Activated B cell treated with CpG ODN at 0.5 μM for 24 hours (primary cell): ENCODE measurements at regions of chr9 and their contacts with region 1.

Region 1: GRCh38 chr9:91422758-91423711 is 597 bp downstream of the NFIL3 start:
- DNase-seq: peak; percentile 62
- ATAC-seq: peak; percentile 49
- H3K4me3 Mint-ChIP-seq: peak overlapping the region; percentile 93
- H3K27ac Mint-ChIP-seq: peak overlapping the region; percentile 80
- H3K4me1 Mint-ChIP-seq: peaks cover 38% of the 10 kb centered on the region
- H3K27me3 Mint-ChIP-seq: peaks cover 32% of the 10 kb centered on the region
- CTCF ChIP-seq: no peak

Region 2: GRCh38 chr9:90914868-90915483 is 508.1 kb before region 1 on chr9:
- CTCF ChIA-PET with region 1: interaction called, 154 read pairs
- POLR2A ChIA-PET with region 1: interaction called, 9 read pairs
- intact Hi-C with region 1: loop called (anchors 1 kb)
- DNase-seq: peak; percentile 60
- ATAC-seq: peak; percentile 98
- H3K4me3 Mint-ChIP-seq: no peak overlapping the region
- H3K27ac Mint-ChIP-seq: no peak overlapping the region
- H3K4me1 Mint-ChIP-seq: peaks cover 21% of the 10 kb centered on the region
- H3K27me3 Mint-ChIP-seq: no peaks in the 10 kb centered on the region
- CTCF ChIP-seq: no peak

Region 3: DNA sequence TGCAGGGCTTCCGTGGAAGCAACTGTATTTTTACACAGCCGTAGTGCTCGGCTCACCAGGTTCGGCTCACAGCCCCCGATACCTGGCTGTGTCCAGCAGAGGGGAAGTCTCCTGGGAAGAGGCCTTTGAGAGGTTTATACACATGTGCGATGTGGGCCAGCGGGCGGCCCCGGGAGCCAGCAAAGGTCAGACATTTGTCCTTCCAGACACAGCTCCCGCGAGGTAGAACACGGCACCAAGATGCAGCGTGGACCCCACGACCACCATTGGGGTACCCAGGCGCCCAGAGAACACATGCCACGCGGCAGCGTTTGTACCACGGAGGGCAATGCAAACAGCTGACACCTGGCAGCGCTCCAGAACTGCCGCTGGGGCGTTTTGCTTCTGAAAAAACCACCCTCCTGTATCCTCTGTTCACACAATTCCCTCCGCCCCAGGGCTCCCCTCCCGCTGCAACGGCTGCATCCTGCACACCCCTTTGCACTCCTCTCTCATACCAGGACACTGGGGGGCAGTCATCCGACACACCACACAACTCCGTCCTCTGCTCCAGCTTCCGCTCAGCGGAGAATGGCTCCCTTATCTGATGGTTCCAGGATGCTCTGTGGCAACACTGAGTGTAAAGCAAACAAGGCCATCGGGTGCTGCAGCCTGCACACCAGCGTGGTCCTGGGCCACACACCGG is 386.1 kb before region 1 on chr9:
- CTCF ChIA-PET with region 1: interaction called, 25 read pairs
- POLR2A ChIA-PET with region 1: no interaction called
- intact Hi-C with region 1: loop called (anchors 1 kb)
- DNase-seq: no peak
- ATAC-seq: peak; percentile 34
- H3K4me3 Mint-ChIP-seq: peak overlapping the region; percentile 55
- H3K27ac Mint-ChIP-seq: no peak overlapping the region
- H3K4me1 Mint-ChIP-seq: peaks cover 31% of the 10 kb centered on the region
- H3K27me3 Mint-ChIP-seq: peaks cover 12% of the 10 kb centered on the region
- CTCF ChIP-seq: no peak

Region 4: DNA sequence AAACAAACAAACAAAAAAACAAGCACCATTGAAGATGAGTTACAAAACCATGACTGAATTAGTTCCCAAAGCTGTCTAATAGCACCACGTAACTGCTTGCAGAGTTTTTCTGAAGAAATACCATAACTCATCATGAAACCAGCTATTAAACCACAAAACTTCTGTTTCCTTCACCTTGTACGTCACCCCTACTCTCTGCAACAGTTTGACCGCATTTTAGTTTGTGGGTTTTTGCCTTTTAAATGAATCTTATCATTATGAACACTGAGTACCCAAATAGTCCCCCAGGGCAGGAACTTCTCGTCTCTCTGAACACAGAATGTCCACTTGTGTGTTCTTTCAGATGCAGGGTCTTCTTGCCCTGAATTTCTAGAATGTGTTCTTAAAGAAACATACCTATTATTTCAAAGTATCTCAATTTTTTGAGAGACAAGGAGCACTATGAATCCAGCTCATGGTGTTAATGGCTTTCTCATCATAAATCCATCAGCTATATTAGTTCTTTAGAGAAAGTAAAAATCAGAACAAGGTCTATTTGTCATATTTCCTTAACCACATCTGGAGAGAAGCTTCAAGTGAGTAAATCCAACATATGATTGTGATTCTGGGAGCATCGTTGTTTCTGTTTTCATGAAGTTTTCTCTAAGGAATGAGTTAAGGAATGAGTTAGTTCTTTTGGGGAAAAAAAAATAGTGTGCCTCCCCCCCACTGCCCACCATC is 271.9 kb before region 1 on chr9:
- CTCF ChIA-PET with region 1: no interaction called
- POLR2A ChIA-PET with region 1: interaction called, 3 read pairs
- intact Hi-C with region 1: loop called (anchors 5 kb)
- DNase-seq: no peak
- ATAC-seq: peak; percentile 77
- H3K4me3 Mint-ChIP-seq: peak overlapping the region; percentile 30
- H3K27ac Mint-ChIP-seq: peak overlapping the region; percentile 62
- H3K4me1 Mint-ChIP-seq: peaks cover 50% of the 10 kb centered on the region
- H3K27me3 Mint-ChIP-seq: no peaks in the 10 kb centered on the region
- CTCF ChIP-seq: no peak

Region 5: DNA sequence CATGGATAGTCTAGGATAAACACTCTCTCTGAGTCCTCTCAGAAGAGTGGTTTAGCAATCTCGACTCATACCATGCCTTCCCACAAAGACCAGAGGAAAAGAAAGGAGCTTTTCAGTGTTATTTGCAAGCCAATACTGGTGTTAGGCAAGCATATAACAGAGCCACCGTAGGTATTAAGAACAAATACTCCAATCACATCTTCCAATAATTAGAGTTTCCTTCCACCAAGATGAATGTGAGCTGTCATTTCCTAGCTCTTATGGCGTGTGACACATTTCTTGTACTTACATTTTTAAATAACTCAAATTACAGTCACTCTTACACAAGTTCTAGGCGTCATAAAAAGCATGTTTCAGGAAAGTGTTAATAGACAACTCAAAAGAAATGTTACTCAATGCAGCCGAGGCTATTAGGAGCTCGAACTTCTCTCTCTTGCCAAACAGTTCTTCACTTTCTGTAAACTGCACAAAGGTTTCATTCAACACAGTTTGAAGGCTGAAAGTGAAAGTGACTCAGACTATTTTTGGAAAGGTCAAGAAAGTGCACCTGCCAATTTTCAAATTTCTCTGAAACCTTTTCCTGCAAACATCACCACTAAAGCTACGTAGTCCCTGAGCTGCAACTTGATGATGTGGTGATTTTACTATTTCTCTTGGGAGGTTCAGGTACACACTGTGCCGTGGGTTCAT is 215.2 kb before region 1 on chr9:
- CTCF ChIA-PET with region 1: no interaction called
- POLR2A ChIA-PET with region 1: no interaction called
- intact Hi-C with region 1: loop called (anchors 1 kb)
- DNase-seq: no peak
- ATAC-seq: peak; percentile 89
- H3K4me3 Mint-ChIP-seq: peak overlapping the region; percentile 47
- H3K27ac Mint-ChIP-seq: peak overlapping the region; percentile 83
- H3K4me1 Mint-ChIP-seq: peaks cover 36% of the 10 kb centered on the region
- H3K27me3 Mint-ChIP-seq: no peaks in the 10 kb centered on the region
- CTCF ChIP-seq: no peak

Region 6: DNA sequence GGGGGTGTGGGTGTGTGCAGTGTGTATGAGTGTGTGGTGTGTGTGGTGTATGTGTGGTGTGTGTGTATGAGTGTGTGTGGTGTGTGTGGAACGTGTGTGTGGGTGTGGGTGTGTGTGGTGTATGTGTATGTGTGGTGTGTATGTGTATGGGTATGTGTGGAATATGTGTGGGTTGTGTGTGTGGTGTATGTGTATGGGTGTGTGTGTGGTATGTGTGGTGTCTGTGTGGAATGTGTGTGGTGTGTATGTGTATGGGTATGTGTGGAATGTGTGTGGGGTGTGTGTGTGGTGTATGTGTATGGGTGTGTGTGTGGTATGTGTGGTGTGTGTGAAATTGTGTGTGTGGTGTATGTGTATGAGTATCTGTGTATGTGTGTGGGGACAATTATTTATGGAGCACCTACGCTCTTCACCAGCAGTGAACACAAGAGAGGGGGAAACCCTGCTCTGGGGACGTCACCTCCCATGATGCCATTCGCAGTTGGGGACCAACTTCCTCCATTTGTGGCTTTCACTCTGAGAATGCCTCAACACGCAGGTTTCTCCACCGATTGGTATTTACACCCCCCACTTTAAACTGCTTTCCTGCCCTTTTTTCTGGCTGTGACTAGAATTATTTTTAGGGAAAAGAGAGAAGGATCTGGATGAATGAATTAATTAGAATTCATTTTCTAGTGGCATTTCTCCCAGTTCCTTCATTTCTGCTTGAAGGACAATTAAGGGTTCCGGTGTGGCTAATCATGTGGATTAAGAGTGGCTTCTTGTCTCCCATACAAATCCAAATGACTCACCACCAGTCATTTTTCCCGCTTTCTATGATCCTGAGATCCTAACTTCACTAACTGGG is 288.9 kb after region 1 on chr9:
- CTCF ChIA-PET with region 1: no interaction called
- POLR2A ChIA-PET with region 1: no interaction called
- intact Hi-C with region 1: loop called (anchors 1 kb)
- DNase-seq: peak; percentile 54
- ATAC-seq: peak; percentile 94
- H3K4me3 Mint-ChIP-seq: no peak overlapping the region
- H3K27ac Mint-ChIP-seq: no peak overlapping the region
- H3K4me1 Mint-ChIP-seq: peaks cover 6% of the 10 kb centered on the region
- H3K27me3 Mint-ChIP-seq: no peaks in the 10 kb centered on the region
- CTCF ChIP-seq: no peak